Activated B cell treated with CpG ODN at 0.5 μM for 24 hours (primary cell): ENCODE measurements at regions of chr12 and their contacts with region 1.

Region 1: DNA sequence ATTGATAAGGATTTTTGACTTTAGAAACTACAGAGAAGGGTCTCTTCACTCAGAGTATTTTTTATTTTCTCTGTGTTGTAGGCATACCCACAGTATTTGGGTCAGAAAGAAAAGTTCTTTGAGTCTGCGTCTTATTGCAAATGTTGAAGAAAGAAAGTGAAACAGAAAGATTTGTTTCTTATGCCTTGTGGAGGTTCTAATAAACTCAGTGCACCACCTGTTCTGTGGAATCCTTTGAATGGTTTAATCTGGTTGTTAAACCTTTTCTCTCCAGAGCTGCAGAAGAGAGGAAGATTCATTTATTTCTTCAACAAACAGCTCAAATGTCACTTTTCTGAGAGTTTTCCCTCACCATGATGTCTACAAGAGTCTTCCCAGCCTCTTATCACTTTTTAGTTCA is 146.6 kb upstream of the PLEKHG7 start:
- DNase-seq: no peak
- ATAC-seq: peak; percentile 33
- H3K4me3 Mint-ChIP-seq: peak overlapping the region; percentile 69
- H3K27ac Mint-ChIP-seq: peak overlapping the region; percentile 90
- H3K4me1 Mint-ChIP-seq: peaks cover 64% of the 10 kb centered on the region
- H3K27me3 Mint-ChIP-seq: no peaks in the 10 kb centered on the region
- CTCF ChIP-seq: no peak

Region 2: DNA sequence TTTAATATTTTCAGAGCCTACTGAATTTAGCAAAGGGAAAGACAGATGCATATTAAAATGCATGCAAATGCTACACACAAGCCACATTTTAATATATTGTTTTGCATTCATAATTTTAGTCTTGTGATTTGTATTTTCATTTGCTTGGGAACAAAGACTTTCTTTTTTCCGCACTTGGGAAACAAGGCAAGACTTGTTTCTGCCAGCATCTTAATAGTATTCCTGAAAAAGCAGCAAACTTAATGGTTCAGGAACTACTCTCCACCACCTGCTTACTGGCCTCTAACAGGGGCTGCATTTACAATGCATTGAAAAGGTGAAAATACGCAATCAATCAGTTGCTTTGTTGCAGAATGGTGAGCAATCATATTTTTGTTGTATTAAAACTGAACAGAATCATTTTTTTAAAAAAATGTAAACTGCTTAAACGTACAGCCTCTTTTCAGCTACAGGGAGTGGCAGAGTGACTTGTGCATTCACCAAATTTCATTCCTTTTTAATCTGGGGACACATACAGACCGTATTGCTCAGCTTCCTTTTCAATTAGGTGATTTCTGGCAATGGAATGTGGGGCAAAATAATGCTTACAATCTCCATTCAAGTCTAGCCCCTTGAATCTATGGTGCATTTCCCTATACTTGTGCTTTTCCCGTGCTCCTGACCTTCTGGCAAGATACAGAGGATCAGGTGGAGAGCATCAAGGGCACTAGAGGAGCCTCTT is 266.4 kb before region 1 on chr12:
- CTCF ChIA-PET with region 1: no interaction called
- POLR2A ChIA-PET with region 1: no interaction called
- intact Hi-C with region 1: loop called (anchors 5 kb)
- DNase-seq: no peak
- ATAC-seq: no peak
- H3K4me3 Mint-ChIP-seq: no peak overlapping the region
- H3K27ac Mint-ChIP-seq: no peak overlapping the region
- H3K4me1 Mint-ChIP-seq: no peaks in the 10 kb centered on the region
- H3K27me3 Mint-ChIP-seq: no peaks in the 10 kb centered on the region
- CTCF ChIP-seq: no peak

Region 3: DNA sequence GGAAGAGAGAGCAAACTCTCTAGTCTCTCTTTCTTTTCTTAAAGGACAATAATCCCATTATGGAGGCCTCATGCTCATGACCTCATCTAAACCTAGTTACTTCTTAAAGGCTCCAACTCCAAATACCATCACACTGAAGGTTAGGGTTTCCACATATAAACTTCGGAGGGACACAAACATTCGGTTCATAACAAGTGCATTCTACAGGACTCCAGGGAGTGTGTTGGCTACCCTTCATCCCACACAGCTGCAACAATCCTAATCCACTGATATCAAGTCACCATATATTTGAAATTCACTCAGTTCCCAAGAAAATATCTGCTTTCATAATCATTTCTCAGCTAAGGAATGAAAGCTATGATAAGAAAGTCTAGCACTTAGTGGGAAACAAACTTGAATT is 119.3 kb before region 1 on chr12:
- CTCF ChIA-PET with region 1: no interaction called
- POLR2A ChIA-PET with region 1: no interaction called
- intact Hi-C with region 1: no loop called
- DNase-seq: no peak
- ATAC-seq: no peak
- H3K4me3 Mint-ChIP-seq: peak overlapping the region; percentile 7
- H3K27ac Mint-ChIP-seq: peak overlapping the region; percentile 97
- H3K4me1 Mint-ChIP-seq: peaks cover 99% of the 10 kb centered on the region
- H3K27me3 Mint-ChIP-seq: no peaks in the 10 kb centered on the region
- CTCF ChIP-seq: no peak

Region 4: GRCh38 chr12:92472201-92472600 is 83.9 kb before region 1 on chr12:
- CTCF ChIA-PET with region 1: no interaction called
- POLR2A ChIA-PET with region 1: interaction called, 10 read pairs
- intact Hi-C with region 1: no loop called
- DNase-seq: no peak
- ATAC-seq: no peak
- H3K4me3 Mint-ChIP-seq: peak overlapping the region; percentile 48
- H3K27ac Mint-ChIP-seq: peak overlapping the region; percentile 96
- H3K4me1 Mint-ChIP-seq: peaks cover 90% of the 10 kb centered on the region
- H3K27me3 Mint-ChIP-seq: no peaks in the 10 kb centered on the region
- CTCF ChIP-seq: no peak

Region 5: DNA sequence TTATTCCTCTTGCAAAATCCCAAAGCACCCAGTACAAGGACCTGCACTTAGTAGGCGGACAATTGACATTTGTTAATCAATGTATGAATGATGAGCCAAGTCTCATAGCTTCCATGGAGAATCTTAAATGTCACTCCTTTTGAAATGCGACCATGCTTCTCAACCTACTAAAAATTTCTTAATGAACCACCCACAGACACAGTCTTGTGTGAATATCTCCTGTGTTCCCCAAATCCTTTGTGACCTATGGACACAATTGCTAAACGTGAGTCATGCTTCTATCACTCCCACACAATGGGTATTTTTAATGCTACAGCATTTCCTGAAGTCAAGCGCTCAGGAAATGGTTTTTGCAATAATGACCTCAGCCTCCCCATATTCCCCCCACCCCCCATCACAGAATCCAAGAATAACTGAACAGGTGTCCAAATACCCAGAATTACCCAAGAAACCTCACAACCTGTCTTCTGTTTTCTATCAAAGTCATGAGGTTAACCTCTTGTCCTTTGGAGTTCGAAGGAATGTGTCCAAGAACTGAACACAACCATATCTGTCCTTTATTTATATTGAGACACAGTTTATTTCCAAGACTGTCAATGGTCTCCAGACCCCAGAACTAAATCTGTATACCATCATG is 16.9 kb before region 1 on chr12:
- CTCF ChIA-PET with region 1: no interaction called
- POLR2A ChIA-PET with region 1: interaction called, 13 read pairs
- intact Hi-C with region 1: loop called (anchors 2 kb)
- DNase-seq: no peak
- ATAC-seq: peak; percentile 32
- H3K4me3 Mint-ChIP-seq: peak overlapping the region; percentile 73
- H3K27ac Mint-ChIP-seq: peak overlapping the region; percentile 97
- H3K4me1 Mint-ChIP-seq: peaks cover 79% of the 10 kb centered on the region
- H3K27me3 Mint-ChIP-seq: no peaks in the 10 kb centered on the region
- CTCF ChIP-seq: no peak

Region 6: GRCh38 chr12:92619730-92620684 is 63.9 kb after region 1 on chr12:
- CTCF ChIA-PET with region 1: no interaction called
- POLR2A ChIA-PET with region 1: no interaction called
- intact Hi-C with region 1: no loop called
- DNase-seq: no peak
- ATAC-seq: no peak
- H3K4me3 Mint-ChIP-seq: no peak overlapping the region
- H3K27ac Mint-ChIP-seq: no peak overlapping the region
- H3K4me1 Mint-ChIP-seq: no peaks in the 10 kb centered on the region
- H3K27me3 Mint-ChIP-seq: no peaks in the 10 kb centered on the region
- CTCF ChIP-seq: no peak

Region 7: DNA sequence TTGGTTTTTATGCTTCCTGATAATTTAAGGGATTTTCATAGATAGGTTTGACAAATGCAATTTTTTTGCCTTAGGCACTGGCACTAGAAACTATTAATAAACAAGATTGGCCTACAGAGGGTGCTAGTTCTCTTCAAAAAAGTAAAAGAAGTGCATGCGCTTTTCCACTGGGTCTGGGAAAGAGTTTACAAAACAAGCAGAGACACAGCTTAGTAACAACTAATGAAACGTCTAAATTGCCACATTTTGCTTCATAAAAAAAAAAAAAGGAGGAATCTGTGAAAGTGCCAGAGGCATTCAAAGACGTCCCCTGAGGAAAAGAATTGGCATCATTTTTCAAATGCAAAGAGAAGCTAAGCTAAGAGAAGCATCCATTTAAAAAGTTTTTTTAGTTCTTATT is 431.2 kb after region 1 on chr12:
- CTCF ChIA-PET with region 1: no interaction called
- POLR2A ChIA-PET with region 1: no interaction called
- intact Hi-C with region 1: no loop called
- DNase-seq: no peak
- ATAC-seq: peak; percentile 26
- H3K4me3 Mint-ChIP-seq: peak overlapping the region; percentile 69
- H3K27ac Mint-ChIP-seq: peak overlapping the region; percentile 89
- H3K4me1 Mint-ChIP-seq: peaks cover 33% of the 10 kb centered on the region
- H3K27me3 Mint-ChIP-seq: no peaks in the 10 kb centered on the region
- CTCF ChIP-seq: peak; percentile 93